Activated CD4-positive, alpha-beta T cell treated with anti-CD3 and anti-CD28 coated beads for 36 hours (primary cell): ENCODE measurements at regions of chr9 and their contacts with region 1.

Region 1: DNA sequence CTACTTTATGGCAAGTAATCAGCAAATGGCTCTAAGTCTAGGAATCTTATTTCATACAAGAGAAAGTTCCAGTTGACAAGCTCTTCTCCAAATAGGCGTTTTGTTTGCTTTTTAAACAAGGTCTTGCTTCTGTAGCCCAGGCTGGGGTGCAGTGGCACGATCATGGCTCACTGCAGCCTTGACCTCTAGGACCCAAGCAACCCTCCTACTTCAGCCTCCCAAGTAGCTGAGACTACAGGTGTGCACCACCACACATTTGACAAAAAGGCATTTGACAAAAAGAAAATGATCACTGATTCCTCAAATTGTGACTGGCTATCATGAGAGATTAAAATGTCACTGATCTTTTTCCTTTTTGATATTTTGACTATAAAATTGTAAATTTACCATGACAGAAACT is 31.8 kb downstream of the NR6A1 start:
- DNase-seq: no peak
- ATAC-seq: no peak
- H3K4me3 Mint-ChIP-seq: no peak overlapping the region
- H3K27ac Mint-ChIP-seq: no peak overlapping the region
- H3K4me1 Mint-ChIP-seq: peaks cover 21% of the 10 kb centered on the region
- H3K27me3 Mint-ChIP-seq: peaks cover 5% of the 10 kb centered on the region

Region 2: DNA sequence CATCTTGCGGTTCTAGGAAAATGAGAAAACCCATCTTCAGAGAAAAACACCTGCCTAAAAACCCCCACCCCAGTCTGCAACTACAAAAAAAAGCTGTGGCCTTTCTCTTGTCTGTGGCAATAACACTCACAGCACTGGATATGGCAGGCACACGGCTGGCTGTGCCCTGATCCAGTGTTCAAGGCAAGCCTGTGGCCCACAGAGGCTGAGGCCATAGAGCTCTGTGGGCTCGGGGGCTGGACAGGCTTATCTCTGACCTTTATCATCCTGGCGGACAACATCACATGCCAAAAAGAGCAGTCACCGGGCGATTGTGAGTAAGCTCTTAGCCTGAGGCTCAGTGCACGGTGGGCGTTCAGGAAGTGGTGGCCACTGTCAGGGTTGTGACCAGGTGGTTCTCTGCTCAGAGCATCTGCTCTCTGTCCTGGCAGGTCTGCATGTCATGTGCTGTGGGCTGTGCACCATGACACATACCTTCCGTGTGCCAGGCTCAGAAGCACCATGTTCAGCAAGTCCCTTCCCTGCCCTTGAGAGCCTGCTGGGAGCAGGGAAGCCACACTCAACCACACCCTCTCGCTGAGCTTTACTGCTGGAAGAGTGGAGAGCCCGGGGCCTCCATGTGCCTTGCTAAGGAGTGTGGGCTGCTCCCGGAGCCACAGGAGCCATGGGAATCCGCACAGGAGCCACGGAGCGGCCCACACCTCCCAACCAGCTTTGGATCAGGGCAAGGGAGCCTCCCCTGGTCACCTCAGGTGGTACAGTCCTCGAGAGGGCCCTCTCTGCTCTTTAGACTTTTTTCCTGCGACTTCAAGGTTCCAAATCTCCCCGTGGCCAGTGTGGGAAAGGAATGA is 79.3 kb after region 1 on chr9:
- CTCF ChIA-PET with region 1: no interaction called
- POLR2A ChIA-PET with region 1: interaction called, 11 read pairs
- intact Hi-C with region 1: no loop called
- DNase-seq: peak; percentile 51
- ATAC-seq: peak; percentile 86
- H3K4me3 Mint-ChIP-seq: no peak overlapping the region
- H3K27ac Mint-ChIP-seq: peak overlapping the region; percentile 65
- H3K4me1 Mint-ChIP-seq: peaks cover 8% of the 10 kb centered on the region
- H3K27me3 Mint-ChIP-seq: peaks cover 4% of the 10 kb centered on the region